Activated CD8-positive, alpha-beta T cell treated with anti-CD3 and anti-CD28 coated beads for 36 hours (primary cell): ENCODE measurements at regions of chr16 and their contacts with region 1.

Region 1: GRCh38 chr16:18801197-18801972 is at the start of gene ARL6IP1:
- DNase-seq: peak; percentile 99
- ATAC-seq: peak; percentile 96
- H3K4me3 Mint-ChIP-seq: peak within 1 kb of the TSS; percentile 98
- H3K27ac Mint-ChIP-seq: peak within 1 kb of the TSS; percentile 95
- H3K4me1 Mint-ChIP-seq: peaks cover 55% of the 10 kb centered on the region
- H3K27me3 Mint-ChIP-seq: no peaks in the 10 kb centered on the region
- CTCF ChIP-seq: peak; percentile 82
- total RNA-seq, gene ARL6IP1: 97.0 to 97.3 TPM

Region 2: GRCh38 chr16:18789850-18790724 is 11.3 kb before region 1 on chr16 and contains the start of gene RPS15A:
- CTCF ChIA-PET with region 1: interaction called, 51 read pairs
- POLR2A ChIA-PET with region 1: interaction called, 210 read pairs
- intact Hi-C with region 1: no loop called
- DNase-seq: peak; percentile 96
- ATAC-seq: peak; percentile 94
- H3K4me3 Mint-ChIP-seq: peak within 1 kb of the TSS; percentile 98
- H3K27ac Mint-ChIP-seq: peak within 1 kb of the TSS; percentile 93
- H3K4me1 Mint-ChIP-seq: peaks cover 38% of the 10 kb centered on the region
- H3K27me3 Mint-ChIP-seq: no peaks in the 10 kb centered on the region
- CTCF ChIP-seq: no peak
- total RNA-seq, gene RPS15A: 2,201 to 2,213 TPM

Region 3: GRCh38 chr16:18816286-18816685 is 14.9 kb after region 1 on chr16:
- CTCF ChIA-PET with region 1: interaction called, 59 read pairs
- POLR2A ChIA-PET with region 1: interaction called, 5 read pairs
- intact Hi-C with region 1: no loop called
- DNase-seq: no peak
- ATAC-seq: no peak
- H3K4me3 Mint-ChIP-seq: no peak overlapping the region
- H3K27ac Mint-ChIP-seq: peak overlapping the region; percentile 46
- H3K4me1 Mint-ChIP-seq: peaks cover 12% of the 10 kb centered on the region
- H3K27me3 Mint-ChIP-seq: no peaks in the 10 kb centered on the region
- CTCF ChIP-seq: no peak

Region 4: GRCh38 chr16:18834864-18835263 is 33.5 kb after region 1 on chr16:
- CTCF ChIA-PET with region 1: interaction called, 7 read pairs
- POLR2A ChIA-PET with region 1: interaction called, 12 read pairs
- intact Hi-C with region 1: no loop called
- DNase-seq: no peak
- ATAC-seq: no peak
- H3K4me3 Mint-ChIP-seq: no peak overlapping the region
- H3K27ac Mint-ChIP-seq: peak overlapping the region; percentile 3
- H3K4me1 Mint-ChIP-seq: peaks cover 22% of the 10 kb centered on the region
- H3K27me3 Mint-ChIP-seq: no peaks in the 10 kb centered on the region
- CTCF ChIP-seq: no peak

Region 5: GRCh38 chr16:18846416-18846815 is 45.0 kb after region 1 on chr16:
- CTCF ChIA-PET with region 1: interaction called, 21 read pairs
- POLR2A ChIA-PET with region 1: interaction called, 3 read pairs
- intact Hi-C with region 1: no loop called
- DNase-seq: no peak
- ATAC-seq: no peak
- H3K4me3 Mint-ChIP-seq: no peak overlapping the region
- H3K27ac Mint-ChIP-seq: peak overlapping the region; percentile 57
- H3K4me1 Mint-ChIP-seq: peaks cover 2% of the 10 kb centered on the region
- H3K27me3 Mint-ChIP-seq: no peaks in the 10 kb centered on the region
- CTCF ChIP-seq: no peak

Region 6: GRCh38 chr16:18932243-18932981 is 131.0 kb after region 1 on chr16:
- CTCF ChIA-PET with region 1: interaction called, 10 read pairs
- POLR2A ChIA-PET with region 1: no interaction called
- intact Hi-C with region 1: no loop called
- DNase-seq: no peak
- ATAC-seq: no peak
- H3K4me3 Mint-ChIP-seq: no peak overlapping the region
- H3K27ac Mint-ChIP-seq: no peak overlapping the region
- H3K4me1 Mint-ChIP-seq: peaks cover 2% of the 10 kb centered on the region
- H3K27me3 Mint-ChIP-seq: no peaks in the 10 kb centered on the region
- CTCF ChIP-seq: no peak